Endothelial cell of umbilical vein (primary cell): ENCODE measurements at regions of chr14 and their contacts with region 1.

Region 1: DNA sequence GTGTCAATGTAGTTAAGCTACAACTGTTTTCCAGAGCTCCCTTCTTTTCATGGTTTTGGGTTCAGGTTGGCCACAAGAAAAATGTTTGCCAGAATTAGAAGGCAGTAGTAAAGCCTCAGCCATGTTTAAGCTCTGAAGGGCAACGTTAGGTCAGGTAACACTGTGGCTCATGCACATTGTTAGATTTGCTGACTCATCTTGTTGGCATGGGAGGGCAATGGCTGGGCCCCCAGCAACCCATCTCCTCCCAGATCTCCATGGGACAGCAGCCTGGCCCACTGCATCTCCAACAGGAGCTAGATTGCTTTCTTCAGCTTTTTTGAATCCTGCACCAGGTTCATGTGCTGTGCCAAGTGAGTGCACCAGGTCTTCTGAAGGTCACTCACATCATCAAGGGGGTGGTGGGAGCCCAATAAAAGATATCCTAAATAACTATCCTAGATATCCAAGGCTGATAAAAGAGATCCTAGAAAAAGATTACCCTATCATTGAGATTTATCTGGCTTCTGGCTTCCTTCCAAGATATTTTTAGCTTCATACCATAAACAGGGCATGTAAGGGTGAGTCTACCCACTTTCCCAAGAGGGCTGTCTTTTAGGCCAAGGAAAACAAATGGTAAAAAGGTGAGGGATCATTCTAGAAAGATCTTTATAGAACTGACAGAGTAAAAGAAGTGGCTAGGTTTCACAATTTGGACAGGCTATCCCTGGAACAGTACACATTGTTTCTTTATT is 28.9 kb downstream of the PTGER2 start:
- DNase-seq: no peak
- H3K4me3 ChIP-seq: no peak overlapping the region
- H3K27ac ChIP-seq: no peak overlapping the region
- H3K4me1 ChIP-seq: peaks cover 3% of the 10 kb centered on the region
- H3K27me3 ChIP-seq: peaks cover 0 to 5% of the 10 kb centered on the region in 2 experiments
- CTCF ChIP-seq: no peak
- POLR2A ChIP-seq: no peak

Region 2: DNA sequence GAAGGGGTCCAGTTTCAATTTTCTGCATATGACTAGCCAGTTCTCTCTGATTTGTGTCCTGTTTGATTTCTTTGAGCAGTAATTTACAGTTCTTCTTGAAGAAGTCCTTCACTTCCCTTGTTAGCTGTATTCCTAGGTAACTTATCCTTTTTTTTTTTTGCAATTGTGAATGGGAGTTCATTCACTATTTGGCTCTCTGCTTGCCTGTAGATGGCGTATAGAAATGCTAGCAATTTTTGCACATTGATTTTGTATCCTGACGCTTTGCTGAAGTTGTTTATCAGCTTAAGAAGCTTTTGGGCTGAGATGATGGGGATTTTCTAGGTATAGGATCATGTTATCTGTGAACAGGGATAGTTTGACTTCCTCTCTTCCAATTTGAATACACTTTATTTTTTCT is 196.5 kb before region 1 on chr14:
- CTCF ChIA-PET with region 1: no interaction called
- POLR2A ChIA-PET with region 1: no interaction called
- dilution Hi-C with region 1: no loop called
- intact Hi-C with region 1: no loop called
- DNase-seq: no peak
- H3K4me3 ChIP-seq: no peak overlapping the region
- H3K27ac ChIP-seq: no peak overlapping the region
- H3K4me1 ChIP-seq: no peaks in the 10 kb centered on the region
- H3K27me3 ChIP-seq: peaks cover 1 to 10% of the 10 kb centered on the region in 2 experiments
- CTCF ChIP-seq: no peak
- POLR2A ChIP-seq: no peak

Region 3: GRCh38 chr14:52329678-52330369 is 13.2 kb before region 1 on chr14:
- CTCF ChIA-PET with region 1: no interaction called
- POLR2A ChIA-PET with region 1: no interaction called
- dilution Hi-C with region 1: no loop called
- intact Hi-C with region 1: loop called (anchors 1 kb)
- DNase-seq: no peak
- H3K4me3 ChIP-seq: no peak overlapping the region
- H3K27ac ChIP-seq: no peak overlapping the region
- H3K4me1 ChIP-seq: no peaks in the 10 kb centered on the region
- H3K27me3 ChIP-seq: peaks cover 3 to 5% of the 10 kb centered on the region in 2 experiments
- CTCF ChIP-seq: no peak
- POLR2A ChIP-seq: no peak

Region 4: DNA sequence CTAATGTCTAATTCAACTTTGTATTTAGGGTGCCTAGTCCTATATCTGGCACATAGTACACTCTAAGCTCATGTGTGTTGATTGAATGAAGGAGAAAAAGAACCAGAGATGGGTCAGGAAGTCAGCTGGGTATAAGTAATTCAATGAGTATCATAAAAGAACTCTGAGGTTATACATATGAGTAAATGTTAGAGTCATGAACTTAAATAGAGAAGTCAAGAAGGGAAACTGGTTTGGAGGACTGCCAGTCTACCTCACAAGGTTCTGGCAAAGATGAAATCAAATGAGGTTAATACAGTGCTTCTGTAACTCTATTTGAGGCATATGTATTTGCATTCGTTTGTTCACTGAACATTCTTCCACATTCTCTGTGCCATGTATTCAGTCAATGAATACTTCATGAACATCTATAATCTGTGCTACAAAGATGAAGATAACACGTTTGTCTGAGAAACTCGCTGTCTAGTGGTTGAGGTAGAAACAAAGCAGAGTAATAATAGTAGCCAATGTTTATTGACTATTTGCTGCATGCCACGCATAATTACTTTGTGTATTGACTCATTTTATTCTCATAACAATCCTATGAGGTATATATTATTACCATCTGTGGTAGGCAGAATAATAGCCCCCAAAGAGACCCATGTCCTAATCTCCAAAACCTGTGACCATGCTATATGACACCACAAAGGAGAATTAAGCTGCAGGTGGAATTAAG is 60.0 kb after region 1 on chr14:
- CTCF ChIA-PET with region 1: no interaction called
- POLR2A ChIA-PET with region 1: no interaction called
- dilution Hi-C with region 1: no loop called
- intact Hi-C with region 1: no loop called
- DNase-seq: no peak
- H3K4me3 ChIP-seq: no peak overlapping the region
- H3K27ac ChIP-seq: no peak overlapping the region
- H3K4me1 ChIP-seq: no peaks in the 10 kb centered on the region
- H3K27me3 ChIP-seq: peaks cover 2 to 13% of the 10 kb centered on the region in 2 experiments
- CTCF ChIP-seq: no peak
- POLR2A ChIP-seq: no peak